Activated naive CD8-positive, alpha-beta T cell treated with anti-CD3 and anti-CD28 coated beads, Interleukin-2, amount 10 ng/mL, durations not matched to agents 7 days and 5 days (primary cell): ENCODE measurements at regions of chr16 and their contacts with region 1.

Region 1: DNA sequence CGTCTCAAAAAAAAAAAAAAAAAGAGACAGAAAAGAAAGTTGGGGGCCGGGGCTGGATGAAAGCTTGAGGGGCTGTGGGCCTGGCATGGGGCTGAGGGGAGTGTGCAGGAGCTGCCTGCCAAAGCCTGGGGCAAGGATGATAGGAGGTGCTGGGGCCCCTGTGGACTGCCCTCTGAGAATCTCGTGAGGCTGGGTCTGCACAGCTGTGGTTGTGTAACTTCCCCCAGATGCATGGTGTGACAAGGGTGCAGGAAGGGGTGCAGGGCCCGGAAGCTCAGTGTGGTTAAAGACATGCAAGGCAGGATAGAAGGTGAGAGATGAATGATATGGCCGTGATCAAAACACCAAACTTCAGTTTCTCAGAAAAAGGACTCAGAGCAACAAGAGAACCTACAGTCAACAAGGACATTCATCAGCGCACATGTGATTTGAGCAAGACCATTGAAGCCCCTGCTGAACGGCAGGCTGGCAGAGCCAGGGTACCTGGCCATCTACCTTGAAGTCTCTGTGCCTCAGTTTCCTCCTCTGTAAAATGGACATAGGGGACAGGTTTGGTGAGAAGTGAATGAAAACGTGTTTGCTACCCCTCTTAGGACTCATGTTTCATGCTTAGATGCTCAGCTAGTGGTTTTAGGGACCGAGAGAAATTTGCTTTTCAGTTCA is 9.6 kb downstream of the IL32 start:
- DNase-seq: peak; percentile 83
- ATAC-seq: peak; percentile 73
- H3K4me3 Mint-ChIP-seq: peak overlapping the region; percentile 83
- H3K27ac Mint-ChIP-seq: peak overlapping the region; percentile 98
- H3K4me1 Mint-ChIP-seq: peaks cover 73% of the 10 kb centered on the region
- H3K27me3 Mint-ChIP-seq: no peaks in the 10 kb centered on the region

Region 2: GRCh38 chr16:3012828-3013420 is 62.1 kb before region 1 on chr16 and contains the start of gene CLDN9:
- POLR2A ChIA-PET with region 1: no interaction called
- DNase-seq: no peak
- ATAC-seq: no peak
- H3K4me3 Mint-ChIP-seq: no peak within 1 kb of the TSS
- H3K27ac Mint-ChIP-seq: no peak within 1 kb of the TSS
- H3K4me1 Mint-ChIP-seq: peaks cover 10% of the 10 kb centered on the region
- H3K27me3 Mint-ChIP-seq: peaks cover 39% of the 10 kb centered on the region
- total RNA-seq, gene CLDN9: not detected

Region 3: GRCh38 chr16:3045357-3045728 is 29.6 kb before region 1 on chr16:
- POLR2A ChIA-PET with region 1: interaction called, 18 read pairs
- DNase-seq: no peak
- ATAC-seq: peak; percentile 45
- H3K4me3 Mint-ChIP-seq: peak overlapping the region; percentile 77
- H3K27ac Mint-ChIP-seq: peak overlapping the region; percentile 83
- H3K4me1 Mint-ChIP-seq: peaks cover 23% of the 10 kb centered on the region
- H3K27me3 Mint-ChIP-seq: peaks cover 35% of the 10 kb centered on the region

Region 4: DNA sequence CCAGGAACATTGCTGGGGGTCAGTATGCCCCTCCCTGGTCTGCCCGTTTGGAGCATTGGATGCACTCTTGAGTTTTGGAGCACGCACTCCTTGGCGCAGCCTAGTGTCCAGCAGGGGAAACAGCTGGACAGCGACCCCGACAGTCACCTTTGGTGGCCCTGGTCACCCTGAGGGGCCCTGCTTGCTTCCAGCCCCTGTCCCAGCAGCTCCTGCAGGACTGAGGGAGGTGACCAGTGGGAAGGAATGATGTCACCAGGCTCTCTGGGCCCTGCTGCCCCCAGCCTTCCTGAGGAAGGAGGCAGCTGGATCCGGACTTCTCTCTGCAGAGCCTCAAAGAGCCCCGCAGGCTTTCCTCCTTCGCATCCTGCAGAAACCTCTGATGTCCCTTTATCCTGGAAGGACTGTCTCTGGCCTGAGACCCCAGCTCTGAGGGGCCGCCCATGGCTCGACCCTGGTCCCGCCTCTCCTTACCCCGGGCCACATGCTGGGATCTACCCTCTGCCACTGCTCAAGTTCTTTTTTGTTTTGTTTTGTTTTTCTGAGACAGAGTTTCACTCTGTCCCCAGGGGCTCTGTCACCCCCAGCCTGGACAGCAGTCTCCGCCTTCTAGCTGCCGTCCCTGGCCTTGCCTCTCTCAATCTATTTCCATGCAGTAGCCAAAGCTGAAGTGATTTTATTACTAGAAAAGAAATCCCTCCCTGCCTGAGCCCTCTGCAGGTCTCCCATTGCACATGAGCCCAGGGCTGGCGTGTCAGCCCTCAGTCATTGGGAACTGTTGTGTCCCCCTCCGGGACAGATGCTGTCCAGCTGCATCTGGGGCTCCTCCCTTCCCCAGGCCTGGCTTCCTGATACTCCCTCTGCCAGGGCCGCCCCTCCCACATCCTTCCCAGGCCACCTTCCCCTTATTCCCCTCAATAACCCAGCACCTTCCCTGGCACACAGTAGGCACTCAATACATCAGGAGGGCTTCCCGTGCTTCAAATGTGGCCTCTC is 12.5 kb after region 1 on chr16:
- POLR2A ChIA-PET with region 1: interaction called, 21 read pairs
- DNase-seq: no peak
- ATAC-seq: no peak
- H3K4me3 Mint-ChIP-seq: no peak overlapping the region
- H3K27ac Mint-ChIP-seq: peak overlapping the region; percentile 54
- H3K4me1 Mint-ChIP-seq: peaks cover 34% of the 10 kb centered on the region
- H3K27me3 Mint-ChIP-seq: no peaks in the 10 kb centered on the region

Region 5: DNA sequence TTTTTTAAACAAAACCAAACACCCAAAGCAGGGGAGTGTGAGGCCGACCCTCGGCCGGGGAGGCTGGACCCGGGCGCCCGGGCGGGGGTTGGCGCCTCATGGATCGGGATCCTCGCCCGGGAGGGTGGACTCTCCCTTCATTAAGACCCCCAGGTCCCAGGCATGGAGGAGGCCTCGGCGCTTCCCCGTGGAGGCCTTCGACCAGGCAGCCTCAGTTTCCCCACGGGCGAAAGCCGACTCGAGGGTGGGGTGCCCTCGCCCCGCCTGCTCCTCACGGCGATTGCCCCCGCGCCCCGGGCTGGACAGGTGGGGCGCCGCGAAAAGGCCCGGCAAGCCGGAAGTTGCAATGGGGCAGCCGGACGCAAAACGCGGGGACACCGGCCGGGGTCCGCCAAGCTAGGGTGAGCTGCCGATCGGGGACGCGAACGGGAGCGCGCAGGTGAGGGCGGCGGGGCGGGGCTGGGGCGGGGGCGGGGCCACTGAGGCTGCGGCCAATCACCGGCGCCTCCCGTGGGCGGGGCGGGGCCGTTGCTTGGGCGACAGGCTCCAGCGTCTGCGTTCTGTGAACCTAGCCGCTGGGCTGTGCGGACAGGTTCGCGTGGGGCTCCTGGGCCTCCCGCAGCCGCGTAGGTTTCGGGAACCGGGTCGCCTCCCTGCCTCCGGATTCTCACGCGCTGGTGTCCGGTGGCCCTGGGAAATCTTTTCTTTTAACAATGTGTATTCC is 31.4 kb after region 1 on chr16:
- POLR2A ChIA-PET with region 1: interaction called, 31 read pairs
- DNase-seq: peak; percentile 95
- ATAC-seq: peak; percentile 89
- H3K4me3 Mint-ChIP-seq: peak overlapping the region; percentile 82
- H3K27ac Mint-ChIP-seq: peak overlapping the region; percentile 89
- H3K4me1 Mint-ChIP-seq: peaks cover 20% of the 10 kb centered on the region
- H3K27me3 Mint-ChIP-seq: peaks cover 2% of the 10 kb centered on the region

Region 6: GRCh38 chr16:3129137-3130131 is 54.4 kb after region 1 on chr16:
- POLR2A ChIA-PET with region 1: interaction called, 43 read pairs
- DNase-seq: peak; percentile 75
- ATAC-seq: peak; percentile 62
- H3K4me3 Mint-ChIP-seq: peak overlapping the region; percentile 96
- H3K27ac Mint-ChIP-seq: peak overlapping the region; percentile 92
- H3K4me1 Mint-ChIP-seq: peaks cover 41% of the 10 kb centered on the region
- H3K27me3 Mint-ChIP-seq: no peaks in the 10 kb centered on the region